CD4-positive, alpha-beta T cell (primary cell): ENCODE measurements at regions of chr18 and their contacts with region 1.

Region 1: DNA sequence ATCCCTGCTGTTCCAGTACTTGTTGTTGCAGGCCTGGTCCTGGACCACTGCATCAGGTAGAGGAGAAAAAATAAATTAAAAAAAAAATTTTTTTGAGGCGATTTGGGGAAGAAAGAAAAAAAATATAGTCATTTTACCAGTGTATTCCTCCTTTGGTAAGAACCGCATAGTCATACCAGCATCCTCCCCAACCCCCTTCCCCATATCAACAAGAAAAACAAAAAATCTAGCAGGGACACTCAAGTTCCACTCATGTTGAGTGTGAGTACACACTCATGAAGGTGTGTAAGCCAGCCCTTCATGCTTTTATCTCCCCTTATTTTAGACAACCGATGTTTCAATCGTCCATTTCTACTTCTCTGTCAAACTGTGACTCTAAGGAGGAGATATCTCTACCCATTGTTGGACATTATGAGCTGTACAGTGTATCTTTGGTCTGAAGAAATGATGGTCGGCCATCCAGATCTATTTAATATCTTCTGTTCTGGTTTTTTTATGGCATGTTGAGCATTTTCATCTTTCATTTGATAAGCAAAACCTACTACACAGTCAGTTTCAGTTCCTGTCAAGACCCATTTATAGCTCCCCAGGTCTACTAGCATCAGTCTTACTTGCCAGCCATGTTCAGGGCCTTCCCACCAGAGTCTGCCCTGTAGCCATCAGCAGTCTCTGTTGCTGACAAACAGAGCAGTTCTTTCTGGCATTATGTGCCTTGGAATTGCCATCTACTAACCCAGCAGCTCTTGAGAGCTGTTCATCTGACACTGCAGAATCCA is 20.0 kb downstream of the ELP2 start:
- DNase-seq: no peak
- ATAC-seq: no peak
- H3K4me3 ChIP-seq: no peak overlapping the region
- H3K4me3 Mint-ChIP-seq: no peak overlapping the region
- H3K27ac ChIP-seq: no peak overlapping the region
- H3K27ac Mint-ChIP-seq: no peak overlapping the region
- H3K4me1 ChIP-seq: no peaks in the 10 kb centered on the region
- H3K4me1 Mint-ChIP-seq: peaks cover 8% of the 10 kb centered on the region
- H3K27me3 ChIP-seq: no peaks in the 10 kb centered on the region
- H3K27me3 Mint-ChIP-seq: no peaks in the 10 kb centered on the region
- CTCF ChIP-seq: no peak

Region 2: GRCh38 chr18:35851286-35851970 is 298.3 kb before region 1 on chr18:
- CTCF ChIA-PET with region 1: no interaction called
- POLR2A ChIA-PET with region 1: no interaction called
- intact Hi-C with region 1: no loop called
- DNase-seq: no peak
- ATAC-seq: no peak
- H3K4me3 ChIP-seq: no peak overlapping the region
- H3K4me3 Mint-ChIP-seq: no peak overlapping the region
- H3K27ac ChIP-seq: no peak overlapping the region
- H3K27ac Mint-ChIP-seq: no peak overlapping the region
- H3K4me1 ChIP-seq: no peaks in the 10 kb centered on the region
- H3K4me1 Mint-ChIP-seq: no peaks in the 10 kb centered on the region
- H3K27me3 ChIP-seq: peaks cover 0 to 4% of the 10 kb centered on the region in 2 experiments
- H3K27me3 Mint-ChIP-seq: peaks cover 14% of the 10 kb centered on the region
- CTCF ChIP-seq: no peak

Region 3: DNA sequence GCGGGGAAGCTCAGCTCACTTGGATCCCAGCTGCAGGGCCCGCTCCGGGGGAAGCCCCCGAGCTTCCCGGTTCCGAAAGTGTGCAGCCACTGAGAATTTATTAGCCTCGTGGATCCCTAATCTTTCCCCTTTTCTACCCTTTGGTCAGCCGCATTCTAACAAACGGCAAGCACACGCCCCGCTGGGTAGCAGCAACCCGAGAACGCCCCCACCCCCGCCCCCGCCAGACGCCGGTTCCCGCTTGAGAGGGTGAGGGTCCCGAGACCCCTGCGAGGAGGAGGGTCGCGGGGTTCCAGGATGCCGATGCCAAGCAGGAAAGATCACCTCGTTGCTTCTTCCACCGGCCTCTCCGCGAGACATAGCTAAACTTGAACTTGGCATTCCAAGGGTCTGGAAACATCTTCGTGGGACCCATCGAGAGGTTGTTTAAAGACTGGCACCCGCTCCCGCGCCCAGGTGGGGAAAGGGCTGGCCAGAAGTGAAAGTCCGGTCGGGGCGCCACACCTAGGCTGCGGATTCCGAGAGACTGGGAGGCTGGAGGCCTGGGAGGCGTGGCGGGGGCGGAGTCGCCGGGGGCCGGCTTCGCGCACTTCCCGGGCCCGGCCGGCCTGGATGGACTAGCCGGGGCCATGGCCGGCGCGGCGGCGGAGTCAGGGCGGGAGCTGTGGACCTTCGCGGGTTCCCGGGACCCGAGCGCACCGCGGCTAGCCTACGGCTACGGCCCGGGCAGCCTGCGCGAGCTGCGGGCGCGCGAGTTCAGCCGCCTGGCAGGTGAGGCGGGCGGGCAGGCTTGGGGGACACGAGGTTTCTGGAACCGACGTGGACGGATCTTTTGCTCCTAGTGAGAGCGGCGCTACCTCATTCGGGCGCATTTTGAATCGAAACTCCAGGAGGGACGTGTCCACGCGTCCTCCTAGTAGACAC is 37.5 kb after region 1 on chr18 and contains the start of gene MOCOS:
- CTCF ChIA-PET with region 1: no interaction called
- POLR2A ChIA-PET with region 1: no interaction called
- intact Hi-C with region 1: no loop called
- DNase-seq: peak in 12 of 14 experiments; percentile 9 to 60 (median 32)
- ATAC-seq: peak; percentile 64
- H3K4me3 ChIP-seq: peak within 1 kb of the TSS; percentile 80
- H3K4me3 Mint-ChIP-seq: peak within 1 kb of the TSS; percentile 82
- H3K27ac ChIP-seq: no peak within 1 kb of the TSS
- H3K27ac Mint-ChIP-seq: no peak within 1 kb of the TSS
- H3K4me1 ChIP-seq: peaks cover 19% of the 10 kb centered on the region
- H3K4me1 Mint-ChIP-seq: peaks cover 9% of the 10 kb centered on the region
- H3K27me3 ChIP-seq: peaks cover 13 to 17% of the 10 kb centered on the region in 2 experiments
- H3K27me3 Mint-ChIP-seq: peaks cover 33% of the 10 kb centered on the region
- CTCF ChIP-seq: no peak
- total RNA-seq, gene MOCOS: not detected

Region 4: DNA sequence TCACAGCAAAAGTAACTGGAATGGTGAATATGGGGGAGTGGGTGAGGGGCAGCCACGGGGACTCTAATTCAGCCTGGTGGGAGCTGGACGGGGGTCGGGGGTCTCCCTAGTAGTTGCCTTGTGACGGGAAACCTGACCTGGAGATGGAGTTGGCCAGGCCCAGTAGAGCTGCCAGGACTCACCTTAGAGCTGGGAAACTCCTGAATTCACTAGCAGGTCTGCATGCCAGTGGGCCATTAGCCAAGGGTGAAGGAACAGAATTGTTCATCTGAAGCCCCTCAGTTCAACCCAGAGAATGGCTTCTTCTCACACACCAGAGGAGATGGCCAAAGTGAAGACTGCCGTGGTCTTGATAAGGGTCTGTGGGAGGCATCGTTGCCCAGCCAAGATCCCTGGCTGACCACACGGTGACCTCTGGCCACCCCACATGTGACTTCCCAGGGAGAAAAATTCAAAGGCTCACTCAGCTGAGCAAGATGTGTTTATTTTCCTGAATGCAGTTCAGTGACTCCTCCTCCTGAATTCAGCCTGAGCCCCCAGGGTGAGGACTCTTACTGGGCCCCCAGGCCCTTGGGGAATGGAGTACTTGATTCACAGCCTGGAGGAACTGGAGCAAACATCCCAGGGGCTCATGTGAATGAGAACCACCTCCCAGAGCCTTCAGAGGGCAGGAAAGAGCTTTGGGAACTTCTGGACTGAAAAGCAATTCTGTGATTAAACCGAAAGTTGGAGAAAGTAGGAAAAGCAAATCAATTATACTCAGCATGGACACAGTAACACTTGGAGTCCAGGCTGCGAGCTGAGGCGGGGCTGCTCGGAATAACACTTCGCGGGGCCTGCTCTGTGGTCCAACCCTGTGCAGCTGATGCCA is 62.8 kb after region 1 on chr18:
- CTCF ChIA-PET with region 1: no interaction called
- POLR2A ChIA-PET with region 1: no interaction called
- intact Hi-C with region 1: loop called in 1 of 2 experiments (anchors 10 kb)
- DNase-seq: no peak
- ATAC-seq: no peak
- H3K4me3 ChIP-seq: no peak overlapping the region
- H3K4me3 Mint-ChIP-seq: no peak overlapping the region
- H3K27ac ChIP-seq: no peak overlapping the region
- H3K27ac Mint-ChIP-seq: no peak overlapping the region
- H3K4me1 ChIP-seq: no peaks in the 10 kb centered on the region
- H3K4me1 Mint-ChIP-seq: no peaks in the 10 kb centered on the region
- H3K27me3 ChIP-seq: no peaks in the 10 kb centered on the region
- H3K27me3 Mint-ChIP-seq: peaks cover 11% of the 10 kb centered on the region
- CTCF ChIP-seq: no peak